ENCODE measurements at regions of chr3 and their contacts with region 1.

Region 1: GRCh38 chr3:30658328-30659052 is 52.1 kb downstream of the TGFBR2 start:
- DNase-seq: peak in 1 of 2 donors; percentile 81
- ATAC-seq: peak; percentile 54 to 75 (median 73)
- H3K4me3 ChIP-seq: no peak overlapping the region
- H3K4me3 Mint-ChIP-seq: peak overlapping the region; percentile 60
- H3K27ac ChIP-seq: peak overlapping the region; percentile 59
- H3K27ac Mint-ChIP-seq: peak overlapping the region; percentile 82 to 84
- H3K4me1 ChIP-seq: peaks cover 60% of the 10 kb centered on the region
- H3K4me1 Mint-ChIP-seq: peaks cover 69 to 86% of the 10 kb centered on the region in 2 donors
- H3K27me3 ChIP-seq: no peaks in the 10 kb centered on the region
- H3K27me3 Mint-ChIP-seq: no peaks in the 10 kb centered on the region
- CTCF ChIP-seq: no peak

Region 2: GRCh38 chr3:30644593-30645012 is 13.9 kb before region 1 on chr3:
- intact Hi-C with region 1: loop called (anchors 2 kb)
- DNase-seq: peak; percentile 47 to 81
- ATAC-seq: peak; percentile 51 to 66 (median 63)
- H3K4me3 ChIP-seq: no peak overlapping the region
- H3K4me3 Mint-ChIP-seq: peak overlapping the region; percentile 62
- H3K27ac ChIP-seq: peak overlapping the region; percentile 94
- H3K27ac Mint-ChIP-seq: peak overlapping the region; percentile 75 to 84
- H3K4me1 ChIP-seq: peaks cover 67% of the 10 kb centered on the region
- H3K4me1 Mint-ChIP-seq: peaks cover 81 to 96% of the 10 kb centered on the region in 2 donors
- H3K27me3 ChIP-seq: no peaks in the 10 kb centered on the region
- H3K27me3 Mint-ChIP-seq: no peaks in the 10 kb centered on the region
- CTCF ChIP-seq: no peak

Region 3: GRCh38 chr3:30681643-30682211 is 23.2 kb after region 1 on chr3:
- intact Hi-C with region 1: no loop called
- DNase-seq: peak in 1 of 2 donors; percentile 41
- ATAC-seq: peak in 1 of 3 donors; percentile 43
- H3K4me3 ChIP-seq: no peak overlapping the region
- H3K4me3 Mint-ChIP-seq: no peak overlapping the region
- H3K27ac ChIP-seq: no peak overlapping the region
- H3K27ac Mint-ChIP-seq: peak overlapping the region; percentile 71 to 84
- H3K4me1 ChIP-seq: peaks cover 17% of the 10 kb centered on the region
- H3K4me1 Mint-ChIP-seq: peaks cover 82 to 87% of the 10 kb centered on the region in 2 donors
- H3K27me3 ChIP-seq: no peaks in the 10 kb centered on the region
- H3K27me3 Mint-ChIP-seq: no peaks in the 10 kb centered on the region
- CTCF ChIP-seq: no peak

Region 4: GRCh38 chr3:30871720-30872119 is 213.2 kb after region 1 on chr3:
- intact Hi-C with region 1: no loop called
- DNase-seq: no peak
- ATAC-seq: no peak
- H3K4me3 ChIP-seq: no peak overlapping the region
- H3K4me3 Mint-ChIP-seq: no peak overlapping the region
- H3K27ac ChIP-seq: no peak overlapping the region
- H3K27ac Mint-ChIP-seq: no peak overlapping the region
- H3K4me1 ChIP-seq: no peaks in the 10 kb centered on the region
- H3K4me1 Mint-ChIP-seq: no peaks in the 10 kb centered on the region
- H3K27me3 ChIP-seq: peaks cover 2% of the 10 kb centered on the region
- H3K27me3 Mint-ChIP-seq: peaks cover 3 to 6% of the 10 kb centered on the region in 2 donors
- CTCF ChIP-seq: no peak

Measured in natural killer cell (primary cell).